ENCODE measurements at regions of chr4 and their contacts with region 1.

Region 1: DNA sequence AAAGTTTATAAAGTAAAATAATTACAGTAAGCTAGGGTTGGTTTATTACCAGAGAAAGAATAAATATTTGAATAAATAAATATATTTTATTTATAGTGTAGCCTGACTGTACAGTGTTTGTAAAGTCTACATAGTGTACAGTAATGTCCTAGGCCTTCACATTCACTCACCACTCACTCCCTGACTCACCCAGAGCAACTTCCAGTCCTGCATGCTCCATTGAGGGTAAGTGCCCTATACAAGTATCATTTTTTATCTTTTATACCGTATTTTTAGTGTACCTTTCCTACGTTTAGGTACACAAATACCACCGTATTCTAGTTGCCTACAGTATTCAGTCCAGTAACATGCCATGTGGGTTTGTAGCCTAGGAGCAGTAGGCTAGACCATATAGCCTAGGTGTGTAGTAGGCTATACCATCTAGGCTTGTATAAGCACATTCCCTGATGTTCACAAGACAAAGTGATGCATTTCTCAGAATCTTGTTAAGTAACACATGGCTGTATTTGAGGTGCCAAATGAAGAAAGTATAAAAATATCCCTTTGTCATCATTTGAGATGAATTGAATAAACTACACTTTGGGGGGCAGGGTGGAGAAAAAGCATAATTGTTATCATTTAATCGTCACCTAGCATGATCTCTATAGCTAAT is 14.7 kb upstream of the KLHL8 start:
- DNase-seq: no peak
- H3K4me3 ChIP-seq: peak overlapping the region; percentile 42 to 74 (median 70)
- H3K4me3 Mint-ChIP-seq: peak overlapping the region; percentile 81 to 92
- H3K27ac ChIP-seq: no peak overlapping the region
- H3K27ac Mint-ChIP-seq: no peak overlapping the region
- H3K4me1 ChIP-seq: no peaks in the 10 kb centered on the region
- H3K4me1 Mint-ChIP-seq: peaks cover 8% of the 10 kb centered on the region
- H3K27me3 ChIP-seq: no peaks in the 10 kb centered on the region
- H3K27me3 Mint-ChIP-seq: peaks cover 0 to 5% (median 3%) of the 10 kb centered on the region in 3 donors
- CTCF ChIP-seq: no peak

Region 2: DNA sequence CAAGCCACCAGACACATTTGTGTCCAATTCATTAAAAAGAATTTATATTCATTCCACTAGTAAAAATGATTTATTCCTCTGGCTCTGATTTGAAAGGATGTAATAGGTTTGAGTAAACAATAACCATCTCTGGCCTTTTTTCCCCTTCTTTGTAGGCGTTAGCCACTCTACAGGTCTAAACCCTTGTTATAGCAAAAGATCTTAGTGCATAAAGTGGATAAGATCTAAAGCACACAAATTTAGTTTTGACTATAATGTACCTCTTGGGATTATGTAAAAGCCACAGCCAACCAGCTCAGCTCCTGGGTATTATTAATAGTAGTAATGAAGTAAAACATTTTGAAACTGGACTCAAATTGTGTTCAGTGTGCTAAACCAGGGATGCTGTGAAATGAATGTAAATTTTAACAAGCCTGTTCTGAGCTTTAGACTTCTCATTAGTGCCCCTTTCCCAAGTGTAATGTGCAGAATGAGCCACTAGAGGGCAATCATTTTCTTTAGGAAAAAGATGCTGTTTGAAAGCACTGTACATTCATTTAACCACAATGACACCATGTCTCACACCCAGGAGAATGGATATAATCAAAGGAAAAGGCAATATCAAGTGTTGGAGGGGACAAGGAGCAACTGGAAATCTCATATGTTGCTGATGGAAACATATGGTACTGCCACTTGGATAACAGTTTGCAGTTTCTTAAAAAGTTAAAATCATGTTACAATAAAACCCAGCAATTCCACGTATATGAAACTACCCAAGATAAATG is 84.5 kb before region 1 on chr4:
- intact Hi-C with region 1: loop called (anchors 2 kb)
- DNase-seq: peak; percentile 54 to 76 (median 55)
- H3K4me3 ChIP-seq: no peak overlapping the region
- H3K4me3 Mint-ChIP-seq: no peak overlapping the region
- H3K27ac ChIP-seq: no peak overlapping the region
- H3K27ac Mint-ChIP-seq: no peak overlapping the region
- H3K4me1 ChIP-seq: no peaks in the 10 kb centered on the region
- H3K4me1 Mint-ChIP-seq: peaks cover 2% of the 10 kb centered on the region
- H3K27me3 ChIP-seq: no peaks in the 10 kb centered on the region
- H3K27me3 Mint-ChIP-seq: peaks cover 0 to 2% (median 0%) of the 10 kb centered on the region in 3 donors
- CTCF ChIP-seq: peak; percentile 93